ENCODE measurements at regions of chr11 and their contacts with region 1.

Region 1: GRCh38 chr11:134139873-134140331 is 71.0 kb downstream of the JAM3 start:
- DNase-seq: no peak
- H3K4me3 ChIP-seq: no peak overlapping the region
- CTCF ChIP-seq: peak; percentile 77

Region 2: DNA sequence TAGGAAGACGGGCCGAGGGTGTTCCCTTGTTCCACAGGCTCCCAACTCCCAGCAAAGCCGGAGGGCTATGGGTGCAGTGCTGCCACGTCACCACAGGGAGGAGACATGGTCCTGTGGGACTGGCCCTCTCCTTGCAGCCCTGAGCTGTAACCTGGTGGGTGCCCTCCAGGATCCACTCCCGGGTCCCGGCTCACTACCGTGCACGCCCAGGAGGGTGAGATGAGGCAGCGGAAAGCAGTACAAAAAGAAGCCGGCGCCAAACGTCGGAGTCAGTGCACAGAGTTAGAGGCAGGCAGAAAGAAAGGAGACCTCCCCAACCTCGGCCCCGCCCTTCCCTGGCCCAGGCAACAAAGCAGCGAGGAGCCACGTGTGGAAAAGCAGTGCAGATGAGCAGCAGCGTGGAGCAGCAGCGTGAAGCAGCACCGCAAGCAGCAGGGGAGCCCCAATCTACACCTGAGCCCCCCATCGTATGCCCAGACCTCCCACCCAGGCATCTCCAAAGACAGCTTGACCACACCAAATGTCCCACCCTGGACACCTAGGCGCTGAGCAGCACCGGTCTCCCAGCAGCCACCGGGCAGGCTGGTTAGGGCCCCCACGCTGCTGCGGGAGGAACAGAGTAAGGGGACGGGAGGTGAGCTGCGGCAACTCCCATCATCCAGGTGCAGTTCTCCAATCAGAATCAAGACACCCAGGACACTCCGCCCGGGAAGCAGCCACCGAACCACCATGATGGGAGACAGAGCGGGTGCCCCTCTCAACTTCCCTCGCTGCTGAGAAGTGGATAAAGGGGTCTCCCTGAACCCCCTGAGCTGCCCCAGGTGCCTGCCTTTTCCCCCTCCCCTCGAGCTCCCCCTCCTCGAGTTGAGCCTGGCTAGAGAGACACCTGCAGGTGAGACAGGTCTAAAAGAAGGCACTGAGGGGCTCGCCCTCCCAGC is 211.9 kb before region 1 on chr11:
- CTCF ChIA-PET with region 1: interaction called, 38 read pairs
- POLR2A ChIA-PET with region 1: no interaction called
- DNase-seq: no peak
- H3K4me3 ChIP-seq: peak overlapping the region; percentile 15; the same call in 1 of the 2 replicates
- CTCF ChIP-seq: peak; percentile 97

Region 3: GRCh38 chr11:134037046-134037908 is 102.6 kb before region 1 on chr11:
- CTCF ChIA-PET with region 1: interaction called, 31 read pairs
- POLR2A ChIA-PET with region 1: no interaction called
- DNase-seq: no peak
- H3K4me3 ChIP-seq: peak overlapping the region; percentile 62
- CTCF ChIP-seq: no peak

Region 4: DNA sequence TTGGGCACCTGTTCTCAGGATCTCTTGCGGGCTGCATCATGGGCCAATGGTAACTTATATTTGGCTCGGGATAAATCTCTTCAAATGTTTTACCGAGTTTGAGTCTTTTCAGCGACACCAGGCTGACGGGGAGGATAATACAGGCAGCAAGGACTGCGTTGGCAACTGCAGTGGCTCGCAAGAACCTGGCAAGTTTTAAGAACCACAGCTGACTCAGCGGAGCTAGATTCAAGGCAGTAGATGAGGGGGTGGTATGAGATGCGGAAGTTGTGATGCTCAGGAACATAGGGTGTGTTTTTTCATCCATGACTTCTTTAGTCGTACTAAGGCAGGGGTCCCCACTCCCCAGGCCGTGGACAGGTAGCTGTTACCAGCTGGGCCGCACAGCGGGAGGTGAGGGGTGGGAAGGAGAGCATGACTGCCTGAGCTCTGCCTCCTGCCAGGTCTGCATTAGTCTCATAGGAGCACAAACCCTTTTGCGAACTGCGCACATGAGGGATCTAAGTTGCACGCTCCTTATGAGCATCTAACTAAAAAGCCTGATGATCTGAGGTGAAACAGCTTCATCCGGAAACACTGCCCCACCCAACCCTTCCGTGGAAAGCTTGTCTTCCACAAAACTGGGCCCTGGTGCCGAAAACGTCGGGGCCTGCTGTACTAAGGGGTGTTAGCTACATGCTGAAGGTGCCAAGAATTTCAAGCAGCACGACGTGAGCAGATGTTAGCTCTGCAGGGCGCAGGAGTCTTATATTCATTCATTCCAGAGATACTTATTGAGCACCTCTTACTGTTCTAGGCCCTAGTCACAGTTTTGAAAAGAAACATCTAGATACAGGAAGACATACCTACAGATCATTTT is 77.4 kb before region 1 on chr11:
- CTCF ChIA-PET with region 1: interaction called, 15 read pairs
- POLR2A ChIA-PET with region 1: no interaction called
- DNase-seq: no peak
- H3K4me3 ChIP-seq: no peak overlapping the region
- CTCF ChIP-seq: no peak

Region 5: DNA sequence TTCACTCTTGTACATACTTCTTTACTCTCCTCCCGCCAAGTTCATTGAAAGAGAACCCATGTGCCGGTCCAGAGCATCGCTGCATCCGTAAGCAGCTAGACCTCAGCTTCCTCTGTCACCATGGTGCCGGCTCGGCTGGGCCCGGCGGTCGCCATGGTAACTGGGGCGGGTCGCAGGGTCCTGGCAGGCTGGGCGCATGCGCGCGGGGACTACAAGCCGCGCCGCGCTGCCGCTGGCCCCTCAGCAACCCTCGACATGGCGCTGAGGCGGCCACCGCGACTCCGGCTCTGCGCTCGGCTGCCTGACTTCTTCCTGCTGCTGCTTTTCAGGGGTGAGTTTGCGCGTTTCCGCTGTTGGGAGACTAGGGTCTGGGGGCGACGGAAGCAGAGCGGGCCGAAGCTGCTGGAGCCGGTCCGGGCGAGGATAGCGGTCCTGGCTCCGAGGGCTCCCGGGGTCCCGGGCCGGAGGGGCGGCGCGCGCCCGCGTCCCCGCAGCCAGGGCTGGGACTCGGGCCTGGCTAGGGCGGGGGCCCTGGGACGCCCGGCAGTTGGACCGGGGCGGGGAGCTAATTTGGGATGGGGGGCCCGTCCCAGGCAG is 71.0 kb before region 1 on chr11 and contains the start of gene JAM3:
- CTCF ChIA-PET with region 1: interaction called, 14 read pairs
- POLR2A ChIA-PET with region 1: no interaction called
- DNase-seq: peak; percentile 52
- H3K4me3 ChIP-seq: peak within 1 kb of the TSS; percentile 92
- CTCF ChIP-seq: no peak

Region 6: DNA sequence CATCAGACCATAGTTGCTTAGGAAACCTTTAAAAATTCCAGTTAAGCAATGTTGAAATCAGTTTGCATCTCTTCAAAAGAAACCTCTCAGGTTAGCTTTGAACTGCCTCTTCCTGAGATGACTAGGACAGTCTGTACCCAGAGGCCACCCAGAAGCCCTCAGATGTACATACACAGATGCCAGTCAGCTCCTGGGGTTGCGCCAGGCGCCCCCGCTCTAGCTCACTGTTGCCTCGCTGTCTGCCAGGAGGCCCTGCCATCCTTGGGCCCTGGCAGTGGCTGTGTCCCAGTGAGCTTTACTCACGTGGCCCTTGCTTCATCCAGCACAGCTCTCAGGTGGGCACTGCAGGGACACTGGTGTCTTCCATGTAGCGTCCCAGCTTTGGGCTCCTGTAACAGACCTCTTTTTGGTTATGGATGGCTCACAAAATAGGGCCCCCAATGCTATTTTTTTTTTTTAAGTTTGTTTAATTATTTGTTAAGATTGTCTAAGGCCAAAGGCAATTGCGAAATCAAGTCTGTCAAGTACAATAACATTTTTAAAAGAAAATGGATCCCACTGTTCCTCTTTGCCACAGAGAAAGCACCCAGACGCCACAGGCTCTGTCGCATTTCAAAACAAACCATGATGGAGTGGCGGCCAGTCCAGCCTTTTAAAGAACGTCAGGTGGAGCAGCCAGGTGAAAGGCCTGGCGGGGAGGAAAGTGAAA is 10.4 kb after region 1 on chr11:
- CTCF ChIA-PET with region 1: interaction called, 13 read pairs
- POLR2A ChIA-PET with region 1: no interaction called
- DNase-seq: no peak
- H3K4me3 ChIP-seq: no peak overlapping the region
- CTCF ChIP-seq: no peak